ENCODE measurements at regions of chr10 and their contacts with region 1.

Region 1: DNA sequence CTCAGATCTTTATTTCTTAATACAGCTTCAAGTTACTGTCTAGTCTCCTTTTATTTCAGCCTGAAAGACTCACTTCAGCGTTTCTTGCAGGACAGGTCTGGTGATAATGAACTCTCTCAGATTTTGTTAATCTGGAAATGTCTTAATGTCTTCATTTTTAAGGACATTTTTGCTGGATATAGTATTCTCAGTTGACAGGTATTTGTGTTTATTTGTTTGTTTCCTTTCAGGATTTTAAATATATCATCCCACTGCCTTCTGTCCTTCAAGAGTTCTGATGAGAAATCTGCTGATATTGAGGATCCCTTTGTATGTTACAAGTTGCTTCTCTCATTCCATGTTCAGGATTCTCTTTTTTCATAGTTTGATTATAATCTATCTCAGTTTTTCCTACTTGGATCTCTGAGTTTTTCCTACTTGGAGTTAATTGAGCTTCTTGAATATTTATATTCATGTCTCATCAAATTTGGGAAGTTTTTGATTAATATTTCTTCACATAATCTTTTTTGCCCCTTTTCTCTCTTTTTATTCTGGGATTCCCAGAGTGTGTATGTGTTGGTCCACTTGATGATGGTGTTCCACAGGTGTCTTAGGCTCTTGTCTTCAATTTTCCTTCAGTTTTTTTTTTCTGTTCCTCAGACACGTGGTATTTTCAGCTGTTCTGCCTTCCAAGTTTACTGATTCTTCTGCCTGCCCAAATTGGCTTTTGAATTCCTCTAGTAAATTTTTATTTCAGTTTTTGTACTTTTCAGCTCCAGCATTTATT is 49.9 kb downstream of the PTEN start:
- DNase-seq: no peak
- H3K4me3 ChIP-seq: no peak overlapping the region
- H3K27me3 ChIP-seq: no peaks in the 10 kb centered on the region
- CTCF ChIP-seq: no peak

Region 2: DNA sequence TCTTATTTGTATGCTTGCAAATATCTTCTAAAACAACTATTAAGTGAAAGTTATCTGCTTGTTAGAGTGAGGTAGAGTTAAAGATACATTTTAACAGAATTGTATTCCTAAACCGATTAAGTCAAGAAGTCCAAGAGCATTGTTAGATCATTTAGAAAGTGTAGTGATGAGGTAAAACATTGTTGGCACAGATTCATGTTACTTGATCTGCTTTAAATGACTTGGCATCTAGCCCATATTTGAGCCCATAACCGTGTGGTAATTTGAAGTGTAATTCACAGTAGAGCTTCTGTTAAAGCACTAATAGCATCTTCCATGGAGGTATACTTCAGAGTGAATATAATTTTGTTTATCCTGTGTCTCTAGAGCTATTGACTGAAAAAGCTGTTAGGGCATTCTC is 12.2 kb after region 1 on chr10:
- CTCF ChIA-PET with region 1: no interaction called
- POLR2A ChIA-PET with region 1: no interaction called
- DNase-seq: no peak
- H3K4me3 ChIP-seq: no peak overlapping the region
- H3K27me3 ChIP-seq: no peaks in the 10 kb centered on the region
- CTCF ChIP-seq: no peak

Region 3: GRCh38 chr10:87961046-87961713 is 47.8 kb after region 1 on chr10:
- CTCF ChIA-PET with region 1: no interaction called
- POLR2A ChIA-PET with region 1: no interaction called
- DNase-seq: peak; percentile 82
- H3K4me3 ChIP-seq: no peak overlapping the region
- H3K27me3 ChIP-seq: no peaks in the 10 kb centered on the region
- CTCF ChIP-seq: no peak

Region 4: GRCh38 chr10:88608052-88608732 is 694.9 kb after region 1 on chr10:
- CTCF ChIA-PET with region 1: no interaction called
- POLR2A ChIA-PET with region 1: no interaction called
- DNase-seq: no peak
- H3K4me3 ChIP-seq: no peak overlapping the region
- H3K27me3 ChIP-seq: no peaks in the 10 kb centered on the region
- CTCF ChIP-seq: no peak

Region 5: DNA sequence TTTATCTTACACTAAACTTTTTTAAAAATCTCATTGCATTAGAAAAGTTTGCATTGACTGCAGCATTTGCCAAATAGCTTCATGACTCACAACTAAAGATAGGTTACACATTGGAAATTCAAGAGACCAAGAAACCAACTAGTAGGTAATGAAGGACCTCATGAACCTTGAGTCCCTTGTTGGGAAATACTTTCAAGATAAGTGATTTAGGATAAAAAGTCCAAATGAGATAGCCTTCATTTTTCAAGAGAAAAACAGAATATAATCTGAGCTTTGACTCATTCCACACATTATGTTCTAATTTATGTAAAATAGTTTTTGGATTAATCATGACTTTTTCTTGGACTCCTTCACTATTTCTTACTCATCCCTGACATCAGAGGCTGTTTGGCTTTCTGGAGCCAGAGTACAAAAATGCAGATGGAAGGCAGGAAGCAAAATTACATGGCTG is 737.8 kb after region 1 on chr10:
- CTCF ChIA-PET with region 1: no interaction called
- POLR2A ChIA-PET with region 1: interaction called, 10 read pairs
- DNase-seq: peak; percentile 71
- H3K4me3 ChIP-seq: no peak overlapping the region
- H3K27me3 ChIP-seq: no peaks in the 10 kb centered on the region
- CTCF ChIP-seq: no peak